ENCODE measurements at regions of chr17 and their contacts with region 1.

Region 1: GRCh38 chr17:76408052-76408849 is 23.8 kb downstream of the SPHK1 start:
- DNase-seq: peak; percentile 43 to 66 (median 50)
- ATAC-seq: peak; percentile 53
- H3K4me3 ChIP-seq: no peak overlapping the region
- H3K27ac ChIP-seq: no peak overlapping the region
- H3K4me1 ChIP-seq: peaks cover 16 to 30% of the 10 kb centered on the region in 2 experiments
- H3K27me3 ChIP-seq: no peaks in the 10 kb centered on the region
- CTCF ChIP-seq: peak; percentile 82 to 83 (median 82)
- EP300 ChIP-seq: no peak
- POLR2A ChIP-seq: no peak
- RAD21 ChIP-seq: peak; percentile 45 to 76; a peak in 3 of 4 replicates

Region 2: DNA sequence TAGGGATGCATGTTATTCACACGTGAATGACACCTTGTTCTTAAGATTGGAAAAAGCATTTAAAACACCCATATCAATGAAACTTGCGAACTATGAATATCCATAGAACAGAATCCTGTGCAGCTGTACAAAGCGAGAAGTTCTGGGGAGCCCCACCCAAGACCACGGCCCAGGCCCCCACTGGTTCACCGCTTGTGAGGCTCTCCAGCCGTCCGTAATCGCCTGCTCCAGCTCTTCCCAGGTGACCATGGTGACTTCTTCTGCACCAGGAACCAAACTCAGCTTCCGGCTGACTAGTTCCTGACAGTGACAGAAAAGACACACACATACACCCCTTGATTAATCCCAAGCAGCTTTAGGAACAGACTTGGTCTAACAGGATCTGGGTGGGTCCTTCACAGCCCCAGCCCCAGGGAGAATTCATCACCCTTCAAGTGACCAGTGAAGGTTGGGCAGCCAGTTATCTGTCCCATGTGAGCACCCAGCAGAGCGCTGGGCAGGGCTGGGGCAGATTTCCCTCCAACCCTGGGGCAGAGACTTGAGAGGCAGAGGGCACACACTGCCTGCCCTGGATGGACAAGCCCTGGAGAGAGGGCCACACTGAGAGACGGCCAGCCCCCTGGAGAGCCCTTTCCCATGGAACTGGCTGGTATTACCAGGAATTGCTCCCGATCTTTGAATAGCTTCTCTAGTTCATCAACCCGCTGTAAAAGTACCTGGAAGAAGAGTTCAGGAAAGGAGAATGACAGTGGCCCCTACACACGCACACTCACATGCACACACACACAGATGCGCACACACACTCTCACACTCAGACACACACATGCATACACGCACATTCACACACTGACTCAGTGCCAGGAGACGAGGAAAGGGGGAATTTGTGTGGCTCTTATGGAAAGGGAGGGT is 103.8 kb before region 1 on chr17:
- CTCF ChIA-PET with region 1: no interaction called
- POLR2A ChIA-PET with region 1: no interaction called
- in situ Hi-C with region 1: loop called (anchors 5 kb)
- intact Hi-C with region 1: no loop called
- DNase-seq: no peak
- ATAC-seq: no peak
- H3K4me3 ChIP-seq: no peak overlapping the region
- H3K27ac ChIP-seq: no peak overlapping the region
- H3K4me1 ChIP-seq: peaks cover 0 to 4% of the 10 kb centered on the region in 2 experiments; a peak in 3 of 5 replicates
- H3K27me3 ChIP-seq: no peaks in the 10 kb centered on the region
- CTCF ChIP-seq: no peak
- EP300 ChIP-seq: no peak
- POLR2A ChIP-seq: no peak
- RAD21 ChIP-seq: no peak

Region 3: GRCh38 chr17:76452660-76453430 is 44.6 kb after region 1 on chr17 and contains the start of gene UBE2O:
- CTCF ChIA-PET with region 1: interaction called, 14 read pairs
- POLR2A ChIA-PET with region 1: interaction called, 4 read pairs
- in situ Hi-C with region 1: loop called (anchors 5 kb)
- intact Hi-C with region 1: loop called (anchors 1 kb)
- DNase-seq: peak; percentile 91 to 98 (median 96)
- ATAC-seq: peak; percentile 96
- H3K4me3 ChIP-seq: peak within 1 kb of the TSS; percentile 97
- H3K27ac ChIP-seq: peak within 1 kb of the TSS; percentile 83; the same call in 2 of the 3 replicates
- H3K4me1 ChIP-seq: peaks cover 12 to 17% of the 10 kb centered on the region in 2 experiments; a peak in 4 of 5 replicates
- H3K27me3 ChIP-seq: no peaks in the 10 kb centered on the region
- CTCF ChIP-seq: peak in 2 of 3 experiments; percentile 7 to 43; a peak in 3 of 6 replicates
- EP300 ChIP-seq: no peak
- POLR2A ChIP-seq: no peak
- RAD21 ChIP-seq: 0 out of 4 replicates have a peak, but pooled peaks of 1 of the 2 experiments have one; percentile 10
- polyA plus RNA-seq, gene UBE2O: 1.6 to 1.7 TPM

Region 4: DNA sequence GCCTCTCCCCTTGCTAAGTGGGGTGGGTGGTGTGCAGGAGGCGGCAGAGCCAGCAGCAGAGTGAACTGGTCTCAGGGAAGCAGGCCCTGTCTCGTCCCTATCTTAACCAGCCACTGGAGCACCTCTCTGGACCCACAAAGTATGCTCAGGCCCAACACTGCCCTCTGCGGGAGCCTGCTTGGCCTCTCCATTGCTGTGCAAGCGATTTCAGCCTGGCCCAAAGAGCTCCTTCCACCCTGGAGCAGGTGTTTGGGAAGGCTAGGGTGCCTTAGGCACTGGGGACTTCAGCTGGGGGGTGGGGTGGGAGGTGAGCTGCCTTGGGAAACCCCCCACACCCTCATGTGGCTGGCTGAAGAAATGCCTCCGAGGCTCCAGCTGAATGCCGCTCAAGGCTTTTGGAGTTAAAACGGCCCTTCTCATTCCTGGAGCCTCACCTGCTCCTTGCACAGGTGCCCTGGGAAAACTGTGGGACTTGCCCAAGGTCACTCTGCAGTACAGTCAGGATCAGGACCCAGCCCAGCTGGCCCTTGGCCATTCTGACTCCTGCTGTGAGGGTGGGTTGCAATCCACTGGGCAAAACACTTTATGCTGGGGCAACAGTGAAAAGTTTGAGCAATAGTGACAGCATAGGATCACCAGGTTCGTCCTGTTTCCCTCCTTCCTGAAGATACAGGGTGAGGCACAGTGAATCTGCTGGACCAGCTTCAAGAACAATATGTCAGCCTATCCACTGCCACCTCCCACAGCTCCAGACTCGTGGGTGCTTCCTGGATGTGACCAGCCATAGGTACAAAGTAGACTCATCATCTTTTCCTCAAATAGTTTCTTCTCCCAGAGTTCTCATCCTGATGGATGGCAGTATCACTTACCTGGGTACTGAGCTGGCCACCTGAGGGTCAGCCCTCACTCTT is 50.6 kb after region 1 on chr17:
- CTCF ChIA-PET with region 1: interaction called, 14 read pairs
- POLR2A ChIA-PET with region 1: no interaction called
- in situ Hi-C with region 1: loop called (anchors 5 kb)
- intact Hi-C with region 1: loop called (anchors 1 kb)
- DNase-seq: peak; percentile 52 to 84 (median 70)
- ATAC-seq: peak; percentile 98
- H3K4me3 ChIP-seq: no peak overlapping the region
- H3K27ac ChIP-seq: no peak overlapping the region
- H3K4me1 ChIP-seq: peaks cover 0 to 8% of the 10 kb centered on the region in 2 experiments; a peak in 3 of 5 replicates
- H3K27me3 ChIP-seq: peaks cover 4 to 15% of the 10 kb centered on the region in 2 experiments; a peak in 2 of 5 replicates
- CTCF ChIP-seq: peak; percentile 82 to 92 (median 89)
- EP300 ChIP-seq: no peak
- POLR2A ChIP-seq: no peak
- RAD21 ChIP-seq: peak; percentile 75 to 92

Measured in K562 (cell line).